CD14-positive monocyte (primary cell): ENCODE measurements at regions of chr18 and their contacts with region 1.

Region 1: GRCh38 chr18:21179590-21180220 is 62.3 kb upstream of the GREB1L start:
- DNase-seq: peak; percentile 56 to 82 (median 74)
- H3K4me3 ChIP-seq: no peak overlapping the region
- H3K4me3 Mint-ChIP-seq: no peak overlapping the region
- H3K27ac ChIP-seq: no peak overlapping the region
- H3K27ac Mint-ChIP-seq: peak overlapping the region in 1 of 7 donors; percentile 70
- H3K4me1 ChIP-seq: peaks cover 9 to 12% of the 10 kb centered on the region in 2 donors
- H3K4me1 Mint-ChIP-seq: peaks cover 19% of the 10 kb centered on the region
- H3K27me3 ChIP-seq: no peaks in the 10 kb centered on the region
- H3K27me3 Mint-ChIP-seq: peaks cover 1 to 3% (median 2%) of the 10 kb centered on the region in 3 donors
- CTCF ChIP-seq: peak; percentile 70

Region 2: DNA sequence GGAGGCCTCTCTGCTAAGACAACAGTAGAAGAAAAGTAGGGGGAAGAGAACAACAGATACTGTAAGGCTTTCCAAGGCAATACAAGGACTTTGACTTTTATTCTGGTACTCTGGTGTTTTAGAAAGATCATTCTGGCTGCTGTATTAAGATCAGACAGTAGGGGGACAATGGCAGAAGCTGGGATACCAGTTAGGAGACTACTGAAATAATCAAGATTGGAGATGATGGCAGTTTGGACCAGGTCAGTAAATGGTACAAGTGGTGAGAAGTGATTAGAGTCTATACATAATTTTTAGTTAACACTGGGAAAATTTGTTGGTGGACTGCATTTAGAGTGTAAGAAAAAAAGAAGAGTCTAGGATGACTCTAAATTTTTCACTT is 207.8 kb before region 1 on chr18:
- intact Hi-C with region 1: loop called in 1 of 2 experiments (anchors 10 kb)
- DNase-seq: peak; percentile 1 to 11 (median 10)
- H3K4me3 ChIP-seq: no peak overlapping the region
- H3K4me3 Mint-ChIP-seq: no peak overlapping the region
- H3K27ac ChIP-seq: no peak overlapping the region
- H3K27ac Mint-ChIP-seq: peak overlapping the region in 2 of 7 donors; percentile 16 to 21
- H3K4me1 ChIP-seq: no peaks in the 10 kb centered on the region
- H3K4me1 Mint-ChIP-seq: no peaks in the 10 kb centered on the region
- H3K27me3 ChIP-seq: no peaks in the 10 kb centered on the region
- H3K27me3 Mint-ChIP-seq: no peaks in the 10 kb centered on the region
- CTCF ChIP-seq: peak; percentile 72

Region 3: GRCh38 chr18:21281611-21282010 is 101.9 kb after region 1 on chr18:
- intact Hi-C with region 1: no loop called
- DNase-seq: no peak
- H3K4me3 ChIP-seq: no peak overlapping the region
- H3K4me3 Mint-ChIP-seq: no peak overlapping the region
- H3K27ac ChIP-seq: no peak overlapping the region
- H3K27ac Mint-ChIP-seq: no peak overlapping the region
- H3K4me1 ChIP-seq: no peaks in the 10 kb centered on the region
- H3K4me1 Mint-ChIP-seq: no peaks in the 10 kb centered on the region
- H3K27me3 ChIP-seq: no peaks in the 10 kb centered on the region
- H3K27me3 Mint-ChIP-seq: peaks cover 0 to 3% (median 1%) of the 10 kb centered on the region in 3 donors
- CTCF ChIP-seq: no peak